Spleen (tissue), 13 donors: ENCODE measurements at regions of chr1 and their contacts with region 1.

Region 1: DNA sequence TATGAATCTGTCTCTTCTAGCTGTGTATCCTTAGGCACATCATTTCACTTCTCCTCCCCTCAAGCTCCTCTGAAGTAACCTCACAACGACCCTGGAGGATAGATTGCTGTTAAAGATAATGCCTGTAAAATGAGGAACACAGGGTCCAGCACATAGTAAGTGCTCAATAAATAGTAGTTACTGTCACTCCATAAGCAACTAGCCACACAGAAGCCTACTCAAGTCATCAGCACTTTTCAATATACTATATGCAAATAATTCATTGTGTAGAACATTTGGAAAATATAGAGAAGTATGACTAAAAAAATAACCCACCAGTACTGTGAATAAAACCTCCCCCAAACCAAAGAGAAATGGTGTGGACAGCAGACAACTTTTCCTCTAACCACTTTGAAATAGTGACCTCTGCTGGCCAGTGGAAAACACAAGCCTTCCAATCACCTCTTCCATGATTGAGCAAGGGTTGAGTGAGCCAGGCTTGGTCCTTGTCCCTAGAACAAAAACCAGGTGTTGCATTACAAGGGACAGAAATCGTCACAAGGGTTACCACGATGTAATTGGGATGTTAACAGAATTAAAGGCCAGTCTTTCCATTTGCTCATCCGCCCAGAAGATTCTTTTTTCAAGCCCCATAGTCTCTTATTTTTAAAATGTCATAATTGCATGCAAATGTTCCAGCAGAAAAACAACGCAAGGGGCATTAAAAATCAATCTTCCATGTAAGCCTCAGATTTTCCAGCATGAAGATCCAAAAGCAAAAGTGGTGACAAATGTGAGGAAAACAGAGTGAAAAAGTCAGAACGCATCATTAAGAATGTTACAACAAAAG is 15.7 kb upstream of the GLIS1 start:
- DNase-seq: no peak
- H3K4me3 ChIP-seq: no peak overlapping the region
- H3K27ac ChIP-seq: no peak overlapping the region
- H3K4me1 ChIP-seq: no peaks in the 10 kb centered on the region
- H3K27me3 ChIP-seq: no peaks in the 10 kb centered on the region
- CTCF ChIP-seq: peak; percentile 14 to 69 (median 54)
- POLR2A ChIP-seq: no peak

Region 2: DNA sequence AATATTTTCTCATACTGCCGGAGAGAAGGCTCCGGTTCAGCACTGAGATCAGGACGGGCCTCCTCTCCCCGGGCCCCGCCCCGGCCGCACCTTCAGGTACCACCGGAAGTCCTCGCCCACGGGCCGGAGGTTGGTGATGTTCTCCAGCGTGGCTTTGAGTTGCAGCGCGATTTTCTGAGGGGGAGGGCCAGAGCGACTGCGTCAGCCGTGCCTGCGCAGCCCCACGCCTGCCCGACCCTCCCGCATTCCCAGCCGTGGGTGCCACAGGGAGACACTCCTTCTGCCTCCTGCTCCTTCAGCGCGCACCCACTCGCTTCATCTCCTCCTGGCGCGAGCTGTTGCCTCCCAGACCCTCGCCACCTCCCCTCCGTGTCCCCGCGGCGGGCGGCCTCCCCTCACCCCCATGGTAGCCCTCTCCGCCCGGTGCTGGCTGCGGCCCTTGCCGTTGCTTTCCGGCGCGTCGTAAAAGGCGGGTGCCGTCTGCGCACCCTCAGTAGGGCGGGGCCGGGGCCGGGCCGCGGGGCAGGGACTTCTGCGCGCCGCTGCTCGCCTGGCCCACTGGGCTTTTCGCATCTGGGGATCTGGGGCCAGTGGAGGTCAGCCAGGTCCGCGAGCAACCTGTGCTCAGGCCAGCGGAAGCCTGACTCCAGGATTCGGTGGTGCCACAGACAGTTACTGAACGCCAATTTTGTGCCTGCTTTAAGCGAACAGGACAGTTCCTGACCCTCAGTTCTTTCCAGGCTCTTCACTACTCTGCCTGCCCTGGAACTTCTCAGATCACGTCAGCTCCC is 534.3 kb before region 1 on chr1 and contains the start of gene CZIB:
- intact Hi-C with region 1: no loop called
- DNase-seq: peak; percentile 99
- H3K4me3 ChIP-seq: peak within 1 kb of the TSS; percentile 62 to 79 (median 72)
- H3K27ac ChIP-seq: peak within 1 kb of the TSS; percentile 96 to 98 (median 97)
- H3K4me1 ChIP-seq: peaks cover 6 to 44% (median 19%) of the 10 kb centered on the region in 6 donors
- H3K27me3 ChIP-seq: no peaks in the 10 kb centered on the region
- CTCF ChIP-seq: peak in 1 of 11 experiments; percentile 12
- POLR2A ChIP-seq: peak; percentile 68 to 86 (median 79)
- total RNA-seq, gene CZIB: 35.3 to 49.9 (median 45.2) TPM

Region 3: DNA sequence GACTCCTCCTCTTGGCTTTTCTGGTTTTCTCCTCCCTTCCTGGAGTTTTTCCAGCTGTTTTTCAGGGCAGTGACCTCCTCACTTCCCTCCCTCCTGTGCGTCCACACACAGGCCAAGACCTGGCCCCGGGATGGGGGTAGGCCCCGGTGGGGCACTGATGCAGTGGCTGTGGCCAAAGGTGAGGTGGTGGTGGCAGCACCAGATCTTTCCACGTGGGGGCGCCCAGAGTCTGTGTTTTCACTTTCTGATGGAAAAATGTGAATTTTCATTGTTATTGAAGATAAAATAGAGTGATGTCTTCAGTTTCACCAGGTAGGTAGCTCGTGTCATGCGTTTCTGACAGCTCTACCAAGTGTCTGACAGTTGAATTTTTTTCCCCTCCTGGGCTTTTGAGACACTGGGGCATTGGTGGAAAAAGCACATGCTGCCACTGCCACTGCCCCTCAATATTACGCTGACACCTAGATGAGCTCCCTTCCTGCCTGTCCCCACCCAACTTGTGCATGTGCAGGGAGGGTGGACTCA is 476.4 kb before region 1 on chr1:
- intact Hi-C with region 1: loop called (anchors 5 kb)
- DNase-seq: peak; percentile 88
- H3K4me3 ChIP-seq: no peak overlapping the region
- H3K27ac ChIP-seq: no peak overlapping the region
- H3K4me1 ChIP-seq: peaks cover 0 to 5% (median 0%) of the 10 kb centered on the region in 6 donors
- H3K27me3 ChIP-seq: no peaks in the 10 kb centered on the region
- CTCF ChIP-seq: peak; percentile 85 to 96 (median 93)
- POLR2A ChIP-seq: no peak

Region 4: GRCh38 chr1:53485478-53486394 is 269.0 kb before region 1 on chr1:
- intact Hi-C with region 1: loop called (anchors 5 kb)
- DNase-seq: peak; percentile 88
- H3K4me3 ChIP-seq: no peak overlapping the region
- H3K27ac ChIP-seq: no peak overlapping the region
- H3K4me1 ChIP-seq: peaks cover 0 to 7% (median 3%) of the 10 kb centered on the region in 6 donors
- H3K27me3 ChIP-seq: peaks cover 0 to 49% (median 17%) of the 10 kb centered on the region in 7 donors
- CTCF ChIP-seq: peak; percentile 41 to 88 (median 73)
- POLR2A ChIP-seq: no peak